Esophagus muscularis mucosa (tissue), 4 donors: ENCODE measurements at regions of chr9 and their contacts with region 1.

Region 1: DNA sequence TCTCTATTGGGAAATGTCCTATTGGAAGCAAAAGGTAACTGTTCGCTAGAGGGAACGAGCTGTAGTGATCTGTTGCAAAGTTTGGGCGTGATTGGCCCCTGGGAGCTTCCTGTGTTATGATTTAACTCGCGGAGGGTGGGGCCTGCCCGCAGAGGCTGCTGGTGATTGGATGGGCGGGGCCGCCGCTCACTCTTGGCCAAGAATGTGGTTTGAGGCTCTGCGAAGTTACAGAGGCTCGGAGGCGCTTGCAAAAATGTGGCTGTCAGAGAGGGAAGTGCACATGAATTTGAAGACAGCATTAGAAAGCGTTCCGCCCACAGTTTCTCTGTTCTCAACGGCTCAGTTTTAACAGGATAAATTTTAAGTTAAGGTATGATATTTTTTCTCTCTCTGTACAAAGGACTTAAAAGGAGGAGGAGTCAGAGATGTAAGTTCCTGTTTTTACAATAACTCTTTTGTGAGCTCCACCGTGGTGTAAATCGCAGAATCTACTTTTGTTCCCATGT is 46.9 kb downstream of the CNTRL start:
- DNase-seq: peak; percentile 99
- H3K4me3 ChIP-seq: peak overlapping the region; percentile 44 to 55 (median 49)
- H3K27ac ChIP-seq: peak overlapping the region; percentile 62 to 78 (median 66)
- H3K4me1 ChIP-seq: peaks cover 7 to 23% (median 13%) of the 10 kb centered on the region in 4 donors
- H3K27me3 ChIP-seq: no peaks in the 10 kb centered on the region
- CTCF ChIP-seq: peak; percentile 35 to 57 (median 47)
- EP300 ChIP-seq: no peak
- POLR2A ChIP-seq: no peak

Region 2: DNA sequence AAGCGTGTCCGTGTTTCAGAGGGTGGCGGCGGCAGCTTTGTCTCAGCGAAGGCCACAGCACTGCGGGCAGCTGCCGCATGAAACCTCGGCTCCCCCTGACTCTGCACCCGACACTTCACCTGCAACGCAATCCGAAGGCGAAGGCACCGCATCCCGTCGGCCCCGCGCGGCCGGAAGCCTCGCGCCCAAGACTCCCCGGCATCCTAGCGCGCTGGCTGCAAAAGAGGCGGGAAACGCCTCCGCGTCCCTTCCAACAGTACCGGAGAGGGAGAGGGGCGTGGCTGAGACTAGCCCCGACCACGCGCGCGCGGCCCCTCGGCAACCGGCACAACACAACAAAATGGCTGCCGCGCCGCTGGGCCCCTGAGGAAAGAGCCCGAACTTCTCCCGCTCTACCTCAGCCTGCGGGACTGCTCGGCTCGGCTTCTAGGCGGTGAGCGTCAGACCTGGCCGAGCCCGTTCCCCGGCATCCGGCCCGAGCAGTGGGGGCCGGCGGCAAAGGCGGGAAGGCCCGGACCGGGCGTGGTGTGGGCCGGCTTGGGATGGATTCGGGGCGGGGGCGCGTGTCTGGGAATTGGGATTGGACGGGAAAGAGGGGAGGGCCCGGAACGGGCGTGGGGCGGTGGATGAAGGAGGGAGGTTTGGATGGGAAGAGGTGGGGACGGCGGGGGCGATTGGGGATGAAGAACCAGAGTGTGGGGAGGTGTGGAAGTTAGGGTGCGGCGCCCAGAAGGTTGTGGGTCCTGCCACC is 46.8 kb before region 1 on chr9 and contains the start of gene CNTRL:
- intact Hi-C with region 1: loop called (anchors 5 kb)
- DNase-seq: peak; percentile 97
- H3K4me3 ChIP-seq: peak within 1 kb of the TSS; percentile 79 to 92 (median 86)
- H3K27ac ChIP-seq: peak within 1 kb of the TSS; percentile 90 to 96 (median 92)
- H3K4me1 ChIP-seq: peaks cover 14 to 33% (median 30%) of the 10 kb centered on the region in 4 donors
- H3K27me3 ChIP-seq: no peaks in the 10 kb centered on the region
- CTCF ChIP-seq: no peak
- EP300 ChIP-seq: peak; percentile 46
- POLR2A ChIP-seq: peak; percentile 21
- total RNA-seq, gene CNTRL: 7.8 to 14.1 (median 11.2) TPM